Ovary (tissue), 10 donors: ENCODE measurements at regions of chr4 and their contacts with region 1.

Region 1: DNA sequence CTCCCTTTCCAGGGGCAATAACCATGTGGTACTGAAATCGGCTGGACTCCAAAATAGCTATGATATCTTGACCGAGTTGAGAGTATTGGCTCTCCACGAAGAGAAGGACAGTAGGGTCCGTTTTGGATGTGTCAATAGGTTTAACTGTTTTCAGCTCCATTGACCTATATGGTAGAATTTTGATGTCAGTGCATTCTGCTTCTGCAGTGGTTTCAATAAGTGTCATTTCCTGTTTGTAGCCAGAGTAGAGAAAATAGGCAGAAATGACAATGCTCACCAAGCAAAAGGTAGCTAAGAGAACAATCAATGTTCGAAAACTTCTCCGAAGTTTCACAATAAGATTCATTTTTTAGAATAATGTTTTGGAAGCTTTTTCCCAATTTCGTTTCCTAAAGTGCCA is 36.7 kb downstream of the NDST4 start:
- DNase-seq: no peak
- H3K4me3 ChIP-seq: no peak overlapping the region
- H3K27ac ChIP-seq: no peak overlapping the region
- H3K4me1 ChIP-seq: no peaks in the 10 kb centered on the region
- H3K27me3 ChIP-seq: no peaks in the 10 kb centered on the region
- CTCF ChIP-seq: no peak
- EP300 ChIP-seq: no peak
- POLR2A ChIP-seq: no peak

Region 2: GRCh38 chr4:115108850-115109249 is 32.2 kb after region 1 on chr4:
- intact Hi-C with region 1: loop called in 1 of 4 experiments (anchors 2 kb)
- DNase-seq: no peak
- H3K4me3 ChIP-seq: no peak overlapping the region
- H3K27ac ChIP-seq: no peak overlapping the region
- H3K4me1 ChIP-seq: no peaks in the 10 kb centered on the region
- H3K27me3 ChIP-seq: no peaks in the 10 kb centered on the region
- CTCF ChIP-seq: no peak
- EP300 ChIP-seq: no peak
- POLR2A ChIP-seq: no peak